PC-3 (cell line): ENCODE measurements at regions of chr13 and their contacts with region 1.

Region 1: GRCh38 chr13:79936368-79937136 is 404.4 kb downstream of the SPRY2 start:
- DNase-seq: peak; percentile 95
- ATAC-seq: peak; percentile 95
- H3K4me3 ChIP-seq: no peak overlapping the region
- H3K27ac ChIP-seq: peak overlapping the region; percentile 97
- H3K4me1 ChIP-seq: peaks cover 44% of the 10 kb centered on the region
- H3K27me3 ChIP-seq: no peaks in the 10 kb centered on the region
- CTCF ChIP-seq: no peak

Region 2: GRCh38 chr13:79679334-79679733 is 257.2 kb before region 1 on chr13:
- CTCF ChIA-PET with region 1: no interaction called
- POLR2A ChIA-PET with region 1: no interaction called
- intact Hi-C with region 1: loop called (anchors 10 kb)
- DNase-seq: peak; percentile 76
- ATAC-seq: peak; percentile 66
- H3K4me3 ChIP-seq: no peak overlapping the region
- H3K27ac ChIP-seq: no peak overlapping the region
- H3K4me1 ChIP-seq: peaks cover 11% of the 10 kb centered on the region; the same call in 1 of the 2 replicates
- H3K27me3 ChIP-seq: no peaks in the 10 kb centered on the region
- CTCF ChIP-seq: peak; percentile 86

Region 3: GRCh38 chr13:79812070-79812850 is 124.3 kb before region 1 on chr13:
- CTCF ChIA-PET with region 1: no interaction called
- POLR2A ChIA-PET with region 1: no interaction called
- intact Hi-C with region 1: loop called (anchors 10 kb)
- DNase-seq: no peak
- ATAC-seq: no peak
- H3K4me3 ChIP-seq: no peak overlapping the region
- H3K27ac ChIP-seq: no peak overlapping the region
- H3K4me1 ChIP-seq: peaks cover 12% of the 10 kb centered on the region; the same call in 1 of the 2 replicates
- H3K27me3 ChIP-seq: no peaks in the 10 kb centered on the region
- CTCF ChIP-seq: no peak

Region 4: GRCh38 chr13:79988573-79988972 is 52.0 kb after region 1 on chr13:
- CTCF ChIA-PET with region 1: no interaction called
- POLR2A ChIA-PET with region 1: interaction called, 10 read pairs
- intact Hi-C with region 1: loop called (anchors 1 kb)
- DNase-seq: peak; percentile 69
- ATAC-seq: peak; percentile 56
- H3K4me3 ChIP-seq: peak overlapping the region; percentile 42; the same call in 1 of the 2 replicates
- H3K27ac ChIP-seq: peak overlapping the region; percentile 100
- H3K4me1 ChIP-seq: peaks cover 43% of the 10 kb centered on the region
- H3K27me3 ChIP-seq: no peaks in the 10 kb centered on the region
- CTCF ChIP-seq: no peak

Region 5: DNA sequence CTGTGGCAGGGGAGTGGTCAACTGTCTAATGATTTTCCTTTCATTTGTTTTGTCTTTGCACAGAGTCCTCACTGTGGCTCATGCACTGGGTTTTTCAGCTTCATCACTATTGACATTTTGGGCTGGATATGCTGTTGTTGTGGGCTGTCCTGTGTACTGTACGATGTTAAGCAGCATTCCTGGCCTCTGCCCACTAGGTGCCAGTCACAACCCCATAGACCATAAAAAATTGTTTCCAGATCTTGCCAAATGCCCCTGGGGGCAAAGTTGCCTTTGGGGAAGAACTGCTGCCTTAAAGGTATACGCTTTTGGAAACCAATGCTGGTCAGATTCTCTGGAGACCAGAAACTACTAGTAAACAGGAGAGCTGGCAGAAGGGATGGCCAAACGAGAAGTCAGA is 93.9 kb after region 1 on chr13:
- CTCF ChIA-PET with region 1: no interaction called
- POLR2A ChIA-PET with region 1: no interaction called
- intact Hi-C with region 1: loop called (anchors 1 kb)
- DNase-seq: peak; percentile 88
- ATAC-seq: peak; percentile 98
- H3K4me3 ChIP-seq: no peak overlapping the region
- H3K27ac ChIP-seq: peak overlapping the region; percentile 69
- H3K4me1 ChIP-seq: peaks cover 23% of the 10 kb centered on the region
- H3K27me3 ChIP-seq: no peaks in the 10 kb centered on the region
- CTCF ChIP-seq: peak; percentile 64

Region 6: GRCh38 chr13:80040196-80040980 is 103.8 kb after region 1 on chr13:
- CTCF ChIA-PET with region 1: no interaction called
- POLR2A ChIA-PET with region 1: no interaction called
- intact Hi-C with region 1: loop called (anchors 1 kb)
- DNase-seq: peak; percentile 95
- ATAC-seq: peak; percentile 87
- H3K4me3 ChIP-seq: no peak overlapping the region
- H3K27ac ChIP-seq: peak overlapping the region; percentile 91
- H3K4me1 ChIP-seq: peaks cover 50% of the 10 kb centered on the region
- H3K27me3 ChIP-seq: no peaks in the 10 kb centered on the region
- CTCF ChIP-seq: no peak